CD14-positive monocyte (primary cell): ENCODE measurements at regions of chr15 and their contacts with region 1.

Region 1: GRCh38 chr15:51649659-51650521 is 27.3 kb upstream of the DMXL2 start:
- DNase-seq: peak; percentile 65 to 82 (median 76)
- H3K4me3 ChIP-seq: no peak overlapping the region
- H3K4me3 Mint-ChIP-seq: no peak overlapping the region
- H3K27ac ChIP-seq: no peak overlapping the region
- H3K27ac Mint-ChIP-seq: peak overlapping the region in 4 of 7 donors; percentile 2 to 83 (median 40)
- H3K4me1 ChIP-seq: peaks cover 19 to 20% of the 10 kb centered on the region in 2 donors
- H3K4me1 Mint-ChIP-seq: peaks cover 22% of the 10 kb centered on the region
- H3K27me3 ChIP-seq: no peaks in the 10 kb centered on the region
- H3K27me3 Mint-ChIP-seq: peaks cover 0 to 2% (median 0%) of the 10 kb centered on the region in 3 donors
- CTCF ChIP-seq: peak; percentile 80

Region 2: GRCh38 chr15:51776952-51777574 is 127.2 kb after region 1 on chr15:
- intact Hi-C with region 1: loop called (anchors 2 kb)
- DNase-seq: peak; percentile 64 to 83 (median 73)
- H3K4me3 ChIP-seq: no peak overlapping the region
- H3K4me3 Mint-ChIP-seq: no peak overlapping the region
- H3K27ac ChIP-seq: no peak overlapping the region
- H3K27ac Mint-ChIP-seq: peak overlapping the region in 2 of 7 donors; percentile 6 to 30
- H3K4me1 ChIP-seq: peaks cover 0 to 3% of the 10 kb centered on the region in 2 donors
- H3K4me1 Mint-ChIP-seq: peaks cover 10% of the 10 kb centered on the region
- H3K27me3 ChIP-seq: no peaks in the 10 kb centered on the region
- H3K27me3 Mint-ChIP-seq: no peaks in the 10 kb centered on the region
- CTCF ChIP-seq: peak; percentile 50